CD4-positive, alpha-beta memory T cell (primary cell): ENCODE measurements at regions of chr4 and their contacts with region 1.

Region 1: DNA sequence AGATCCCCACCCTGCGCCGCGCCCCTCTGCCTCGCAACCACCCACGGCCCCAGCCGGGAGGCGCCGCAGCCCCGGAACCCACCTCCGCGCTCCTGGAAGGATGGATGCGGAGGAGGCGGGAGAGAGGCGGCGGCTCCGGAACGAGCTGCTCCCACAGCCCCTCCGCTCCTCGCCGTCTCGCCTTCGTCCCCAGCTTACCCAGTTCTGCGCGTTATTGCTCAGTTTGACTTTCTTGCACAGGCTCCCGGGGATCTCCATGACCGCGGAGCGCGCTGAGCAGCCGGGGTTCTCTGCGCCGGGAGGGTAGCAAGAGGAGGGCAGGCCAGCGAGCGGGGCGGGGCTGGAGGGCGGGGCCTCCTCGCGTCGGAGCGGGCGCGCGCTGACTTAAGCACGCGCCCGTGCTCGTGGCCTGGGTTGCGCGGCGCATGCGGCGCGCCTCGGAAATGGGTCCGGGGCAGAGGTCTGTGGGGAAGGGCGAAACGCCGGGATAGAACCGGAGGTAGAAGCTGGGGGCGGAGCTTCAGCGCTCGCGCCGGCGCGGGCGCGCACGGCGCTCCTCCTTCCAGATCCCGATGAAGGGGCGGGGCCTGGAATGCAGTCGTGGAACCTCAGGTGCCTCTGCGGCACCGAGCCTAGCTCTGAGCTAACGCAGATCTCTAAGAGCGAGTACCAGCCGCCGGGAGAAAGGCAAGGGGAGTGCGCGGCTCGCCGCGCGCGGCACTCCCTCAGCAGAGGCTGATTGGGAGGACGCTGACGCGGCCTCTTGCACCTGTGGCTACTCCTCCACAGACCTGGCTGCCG is at the start of gene PAPSS1:
- DNase-seq: peak; percentile 95 to 96 (median 96)
- H3K4me3 ChIP-seq: peak within 1 kb of the TSS; percentile 53 to 94
- H3K4me3 Mint-ChIP-seq: peak within 1 kb of the TSS; percentile 91 to 98 (median 96)
- H3K27ac ChIP-seq: peak within 1 kb of the TSS; percentile 73
- H3K27ac Mint-ChIP-seq: peak within 1 kb of the TSS; percentile 91 to 98 (median 94)
- H3K4me1 ChIP-seq: peaks cover 25% of the 10 kb centered on the region
- H3K4me1 Mint-ChIP-seq: peaks cover 27 to 45% (median 34%) of the 10 kb centered on the region in 4 donors
- H3K27me3 ChIP-seq: no peaks in the 10 kb centered on the region
- H3K27me3 Mint-ChIP-seq: no peaks in the 10 kb centered on the region
- total RNA-seq, gene PAPSS1: 23.0 to 23.1 TPM

Region 2: GRCh38 chr4:107736924-107737448 is 16.9 kb after region 1 on chr4:
- CTCF ChIA-PET with region 1: interaction called, 49 read pairs
- POLR2A ChIA-PET with region 1: no interaction called
- intact Hi-C with region 1: loop called (anchors 2 kb)
- DNase-seq: peak; percentile 42 to 50 (median 46)
- H3K4me3 ChIP-seq: no peak overlapping the region
- H3K4me3 Mint-ChIP-seq: no peak overlapping the region
- H3K27ac ChIP-seq: no peak overlapping the region
- H3K27ac Mint-ChIP-seq: peak overlapping the region in 2 of 7 donors; percentile 43 to 69
- H3K4me1 ChIP-seq: no peaks in the 10 kb centered on the region
- H3K4me1 Mint-ChIP-seq: no peaks in the 10 kb centered on the region
- H3K27me3 ChIP-seq: no peaks in the 10 kb centered on the region
- H3K27me3 Mint-ChIP-seq: no peaks in the 10 kb centered on the region

Region 3: DNA sequence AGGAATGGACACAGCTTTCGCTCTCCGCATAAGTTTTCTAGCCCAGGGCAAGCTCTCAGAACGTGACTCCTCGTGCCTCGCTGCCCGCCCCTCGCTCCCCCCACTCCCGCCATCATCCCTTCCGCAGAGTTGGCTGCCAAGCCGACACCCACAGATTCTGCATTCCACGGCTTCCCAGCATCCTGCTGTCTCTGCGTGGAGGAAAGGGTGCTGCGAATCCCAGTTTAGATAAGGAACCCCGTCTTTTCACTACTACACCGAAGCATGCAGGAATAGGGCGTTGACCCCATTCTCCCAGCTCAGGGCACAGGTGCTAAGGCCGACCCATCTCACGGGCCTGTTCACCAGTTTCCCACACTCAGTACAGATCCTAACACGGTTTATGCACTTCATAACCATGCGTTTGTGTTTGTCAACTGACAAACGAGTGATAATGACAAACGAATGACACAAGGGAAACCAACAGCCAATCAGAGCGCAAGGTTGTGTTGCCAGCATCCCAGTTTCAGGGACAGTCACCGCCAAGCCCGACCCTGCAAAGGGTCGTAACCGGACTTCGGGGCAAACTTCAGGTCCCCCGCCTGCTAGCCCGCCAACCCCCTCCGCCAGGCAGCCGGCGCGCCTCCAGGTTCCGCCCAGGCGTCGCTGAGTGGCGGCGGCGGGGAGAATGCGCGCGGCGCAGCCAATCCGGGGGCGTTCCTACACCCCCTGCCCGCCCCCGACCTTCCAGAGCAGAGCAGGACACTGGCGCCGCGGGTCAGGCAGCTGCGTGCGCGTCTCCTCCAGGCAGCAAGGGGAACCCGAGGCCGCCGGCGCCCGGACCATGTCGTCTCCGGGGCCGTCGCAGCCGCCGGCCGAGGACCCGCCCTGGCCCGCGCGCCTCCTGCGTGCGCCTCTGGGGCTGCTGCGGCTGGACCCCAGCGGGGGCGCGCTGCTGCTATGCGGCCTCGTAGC is 211.0 kb after region 1 on chr4 and contains the start of gene CYP2U1:
- CTCF ChIA-PET with region 1: interaction called, 3 read pairs
- POLR2A ChIA-PET with region 1: interaction called, 16 read pairs
- intact Hi-C with region 1: loop called (anchors 1 kb)
- DNase-seq: peak; percentile 80 to 85 (median 81)
- H3K4me3 ChIP-seq: peak within 1 kb of the TSS; percentile 63 to 81
- H3K4me3 Mint-ChIP-seq: peak within 1 kb of the TSS; percentile 92 to 97 (median 92)
- H3K27ac ChIP-seq: peak within 1 kb of the TSS; percentile 52
- H3K27ac Mint-ChIP-seq: peak within 1 kb of the TSS; percentile 54 to 97 (median 93)
- H3K4me1 ChIP-seq: peaks cover 18% of the 10 kb centered on the region
- H3K4me1 Mint-ChIP-seq: peaks cover 16 to 38% (median 28%) of the 10 kb centered on the region in 4 donors
- H3K27me3 ChIP-seq: no peaks in the 10 kb centered on the region
- H3K27me3 Mint-ChIP-seq: no peaks in the 10 kb centered on the region
- total RNA-seq, gene CYP2U1: 6.3 to 7.2 TPM

Region 4: DNA sequence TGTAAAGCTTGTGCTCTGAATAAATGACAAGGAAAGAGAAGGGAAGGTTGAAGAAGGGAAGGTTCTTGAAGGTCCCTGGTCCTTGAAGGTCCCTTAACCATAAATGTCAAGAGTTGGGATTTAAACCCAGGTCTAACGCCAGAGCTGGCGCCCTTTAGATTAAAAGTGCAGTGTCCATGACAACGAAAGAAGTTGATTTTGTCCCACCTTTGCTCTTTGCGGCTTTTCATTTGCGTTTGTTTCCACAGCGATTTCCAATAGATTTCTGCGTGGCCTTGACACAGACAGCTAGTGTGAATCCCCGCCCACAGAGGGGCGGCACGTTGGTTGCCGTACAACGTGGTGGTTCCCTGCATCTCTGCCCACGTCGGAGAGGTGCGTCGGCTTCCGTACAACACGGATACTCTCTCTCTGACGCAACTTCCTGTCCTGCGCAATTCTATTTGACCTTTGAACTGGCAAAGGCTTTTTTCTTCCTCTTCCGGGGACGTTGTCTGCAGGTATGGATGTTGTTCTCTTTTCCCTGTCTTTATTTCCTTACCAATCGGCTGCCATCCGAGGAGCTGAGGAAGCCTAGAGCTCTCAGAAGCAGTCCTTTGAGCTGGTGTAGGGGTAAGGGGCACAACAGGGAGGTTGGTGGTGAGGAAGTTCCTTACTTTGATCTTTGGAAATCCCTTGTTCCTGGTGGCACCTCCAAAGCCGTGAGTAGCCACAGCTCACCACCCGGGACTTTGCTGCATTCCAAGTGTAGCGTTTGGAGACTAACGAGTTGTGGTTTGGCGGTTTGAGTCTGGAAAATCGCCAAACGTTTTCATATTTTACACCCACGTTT is 900.2 kb after region 1 on chr4 and contains the start of gene RPL34:
- CTCF ChIA-PET with region 1: no interaction called
- POLR2A ChIA-PET with region 1: interaction called, 12 read pairs
- intact Hi-C with region 1: loop called (anchors 1 kb)
- DNase-seq: peak; percentile 95 to 99 (median 96)
- H3K4me3 ChIP-seq: peak within 1 kb of the TSS; percentile 66 to 91
- H3K4me3 Mint-ChIP-seq: peak within 1 kb of the TSS; percentile 87 to 97 (median 96)
- H3K27ac ChIP-seq: peak within 1 kb of the TSS; percentile 79
- H3K27ac Mint-ChIP-seq: peak within 1 kb of the TSS; percentile 92 to 99 (median 98)
- H3K4me1 ChIP-seq: peaks cover 49% of the 10 kb centered on the region
- H3K4me1 Mint-ChIP-seq: peaks cover 37 to 58% (median 47%) of the 10 kb centered on the region in 4 donors
- H3K27me3 ChIP-seq: no peaks in the 10 kb centered on the region
- H3K27me3 Mint-ChIP-seq: no peaks in the 10 kb centered on the region
- total RNA-seq, gene RPL34: 2,902 to 3,093 TPM